CD14-positive monocyte (primary cell): ENCODE measurements at regions of chr6 and their contacts with region 1.

Region 1: GRCh38 chr6:42166444-42167141 is 6.6 kb upstream of the GUCA1A start:
- DNase-seq: peak; percentile 42 to 58 (median 45)
- H3K4me3 ChIP-seq: no peak overlapping the region
- H3K4me3 Mint-ChIP-seq: no peak overlapping the region
- H3K27ac ChIP-seq: no peak overlapping the region
- H3K27ac Mint-ChIP-seq: no peak overlapping the region
- H3K4me1 ChIP-seq: no peaks in the 10 kb centered on the region
- H3K4me1 Mint-ChIP-seq: peaks cover 3% of the 10 kb centered on the region
- H3K27me3 ChIP-seq: no peaks in the 10 kb centered on the region
- H3K27me3 Mint-ChIP-seq: peaks cover 0 to 12% (median 4%) of the 10 kb centered on the region in 3 donors
- CTCF ChIP-seq: peak; percentile 95

Region 2: DNA sequence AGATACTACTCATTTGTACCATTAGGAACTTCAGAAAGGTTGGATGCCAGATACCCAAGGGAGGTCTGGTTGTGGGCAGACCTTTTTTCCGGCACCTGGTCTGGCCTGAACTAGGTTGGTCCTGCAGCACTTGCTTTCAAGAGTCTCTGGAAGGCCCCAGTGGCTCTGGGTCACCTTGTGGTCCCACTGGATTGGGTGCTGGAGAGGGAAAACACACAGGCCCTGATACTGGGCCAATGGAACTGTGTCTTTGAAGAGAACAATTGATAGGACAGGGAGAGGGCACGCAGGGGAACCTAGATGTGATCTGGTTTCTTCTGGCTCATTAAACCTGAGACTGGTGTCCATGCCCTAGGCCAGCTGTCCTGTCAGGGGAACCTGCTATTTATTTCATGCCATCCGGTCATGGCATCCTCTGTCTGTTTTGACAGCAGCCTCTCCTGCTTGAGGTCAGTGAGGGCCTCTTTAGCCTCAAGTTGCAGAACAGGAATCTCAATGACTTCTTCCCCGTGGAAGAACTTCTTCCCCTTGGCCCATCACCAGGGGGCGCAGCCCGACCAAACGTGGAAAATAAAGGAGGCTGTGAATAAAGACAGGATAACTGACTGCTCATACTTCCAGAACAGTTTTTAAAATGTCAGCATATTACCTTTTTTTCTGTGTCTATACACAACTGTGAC is 91.3 kb before region 1 on chr6:
- intact Hi-C with region 1: loop called (anchors 1 to 2 kb)
- DNase-seq: peak; percentile 22 to 37 (median 33)
- H3K4me3 ChIP-seq: no peak overlapping the region
- H3K4me3 Mint-ChIP-seq: no peak overlapping the region
- H3K27ac ChIP-seq: no peak overlapping the region
- H3K27ac Mint-ChIP-seq: peak overlapping the region in 1 of 7 donors; percentile 41
- H3K4me1 ChIP-seq: no peaks in the 10 kb centered on the region
- H3K4me1 Mint-ChIP-seq: no peaks in the 10 kb centered on the region
- H3K27me3 ChIP-seq: no peaks in the 10 kb centered on the region
- H3K27me3 Mint-ChIP-seq: peaks cover 0 to 4% (median 2%) of the 10 kb centered on the region in 3 donors
- CTCF ChIP-seq: peak; percentile 79